ENCODE measurements at regions of chr1 and their contacts with region 1.

Region 1: DNA sequence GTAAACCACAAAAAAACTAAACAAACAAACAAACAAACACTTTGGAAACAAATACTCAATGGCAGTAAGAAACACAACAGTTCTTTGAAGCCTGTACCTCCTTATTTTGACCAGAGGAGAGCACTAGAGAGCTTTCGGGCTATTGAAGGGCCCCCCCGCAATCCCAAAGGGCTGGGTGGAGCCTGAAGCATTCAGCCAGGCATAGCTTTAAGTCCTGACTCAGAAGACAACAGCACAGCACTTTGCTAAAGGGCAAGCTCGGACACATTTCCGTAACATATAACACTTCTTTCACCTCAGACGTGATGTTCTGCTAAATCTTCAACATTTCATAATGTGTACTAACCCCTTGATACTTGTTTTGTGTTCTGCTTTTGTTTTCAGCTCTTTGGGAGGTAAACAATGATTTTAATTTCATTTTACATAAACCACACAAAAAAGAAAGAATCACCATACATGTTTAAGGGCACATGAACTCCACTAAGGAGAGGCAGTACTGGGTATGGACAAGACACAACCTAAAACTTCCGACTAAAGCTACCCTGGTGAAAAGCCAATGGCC is 9.7 kb upstream of the SHCBP1L start:
- DNase-seq: peak in 3 of 9 donors; percentile 5 to 31 (median 19)
- ATAC-seq: peak; percentile 83
- H3K4me3 ChIP-seq: no peak overlapping the region
- H3K4me3 Mint-ChIP-seq: no peak overlapping the region
- H3K27ac ChIP-seq: no peak overlapping the region
- H3K27ac Mint-ChIP-seq: no peak overlapping the region
- H3K4me1 ChIP-seq: no peaks in the 10 kb centered on the region
- H3K4me1 Mint-ChIP-seq: peaks cover 0 to 3% (median 0%) of the 10 kb centered on the region in 7 donors
- H3K27me3 ChIP-seq: no peaks in the 10 kb centered on the region
- H3K27me3 Mint-ChIP-seq: peaks cover 12 to 21% (median 17%) of the 10 kb centered on the region in 5 donors

Region 2: DNA sequence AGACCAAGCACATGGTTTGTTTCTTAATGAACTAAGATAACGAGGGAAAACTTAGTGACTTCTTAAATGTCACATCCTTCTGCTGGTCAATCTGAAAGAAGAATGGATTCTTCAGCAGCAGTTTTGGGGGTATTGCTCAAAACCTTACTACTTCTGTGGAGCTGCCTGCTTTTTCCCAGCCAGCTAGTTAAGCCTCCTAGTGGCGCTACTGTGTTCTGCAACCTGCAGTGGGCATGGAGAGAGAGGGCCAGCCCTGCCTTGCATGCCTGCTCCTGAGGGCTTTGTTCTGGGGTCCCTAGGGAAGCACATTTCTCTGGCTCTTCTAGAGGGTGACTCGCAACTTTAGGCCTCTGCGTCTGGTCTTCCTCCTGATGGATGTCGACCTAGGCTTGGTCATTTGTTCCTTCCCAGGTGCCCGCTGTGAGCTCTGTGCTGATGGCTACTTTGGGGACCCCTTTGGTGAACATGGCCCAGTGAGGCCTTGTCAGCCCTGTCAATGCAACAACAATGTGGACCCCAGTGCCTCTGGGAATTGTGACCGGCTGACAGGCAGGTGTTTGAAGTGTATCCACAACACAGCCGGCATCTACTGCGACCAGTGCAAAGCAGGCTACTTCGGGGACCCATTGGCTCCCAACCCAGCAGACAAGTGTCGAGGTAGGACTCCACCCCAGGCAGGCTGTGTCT is 265.5 kb after region 1 on chr1:
- CTCF ChIA-PET with region 1: no interaction called
- POLR2A ChIA-PET with region 1: no interaction called
- intact Hi-C with region 1: loop called (anchors 1 to 5 kb)
- DNase-seq: peak in 5 of 9 donors; percentile 30 to 56 (median 34)
- ATAC-seq: peak; percentile 52
- H3K4me3 ChIP-seq: no peak overlapping the region
- H3K4me3 Mint-ChIP-seq: no peak overlapping the region
- H3K27ac ChIP-seq: no peak overlapping the region
- H3K27ac Mint-ChIP-seq: no peak overlapping the region
- H3K4me1 ChIP-seq: no peaks in the 10 kb centered on the region
- H3K4me1 Mint-ChIP-seq: peaks cover 0 to 5% (median 0%) of the 10 kb centered on the region in 7 donors
- H3K27me3 ChIP-seq: no peaks in the 10 kb centered on the region
- H3K27me3 Mint-ChIP-seq: peaks cover 0 to 6% (median 0%) of the 10 kb centered on the region in 5 donors

Region 3: DNA sequence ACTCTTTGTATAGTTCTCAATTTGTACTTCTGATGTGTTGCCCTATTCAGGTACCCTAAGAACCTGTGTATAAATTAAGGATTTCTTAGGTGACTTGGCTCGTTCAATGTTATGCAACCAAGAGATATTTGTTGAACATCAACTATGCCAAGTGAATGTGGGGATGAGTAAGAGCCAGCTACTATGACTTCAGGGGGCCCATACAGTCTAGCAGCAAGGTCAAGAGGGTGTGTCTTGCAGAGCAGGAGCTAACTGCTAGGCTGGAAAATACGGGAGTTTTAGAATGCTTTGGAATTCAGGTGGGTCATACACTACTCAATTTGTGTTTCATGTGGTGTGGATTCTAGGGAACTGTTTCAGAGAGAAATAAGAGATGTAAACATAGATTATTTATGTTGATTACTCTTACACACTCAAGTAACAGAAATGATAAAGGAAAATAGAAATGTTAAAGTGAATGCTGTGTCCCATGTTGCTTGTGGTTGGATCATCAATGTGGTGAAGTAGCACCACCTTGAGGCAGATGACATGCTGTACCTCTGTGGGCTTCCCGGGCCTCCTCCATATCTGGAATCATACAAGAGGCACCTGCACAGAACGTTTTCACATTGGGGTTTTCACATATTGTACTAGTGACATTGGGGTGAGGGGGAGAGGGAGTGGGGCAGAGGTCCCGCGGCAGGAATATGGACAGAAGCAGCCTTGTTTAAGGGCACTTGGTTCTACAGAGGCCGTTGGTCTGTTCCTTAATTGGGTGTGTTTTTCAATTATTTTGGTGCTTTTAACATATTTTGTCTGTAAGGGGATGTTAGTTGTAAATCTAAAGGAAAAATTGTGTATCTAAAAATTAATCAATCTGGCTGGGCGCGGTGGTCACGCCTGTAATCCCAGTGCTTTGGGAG is 660.5 kb after region 1 on chr1:
- CTCF ChIA-PET with region 1: no interaction called
- POLR2A ChIA-PET with region 1: no interaction called
- intact Hi-C with region 1: loop called in 1 of 2 experiments (anchors 2 kb)
- DNase-seq: peak in 7 of 9 donors; percentile 38 to 67 (median 43)
- ATAC-seq: peak; percentile 96
- H3K4me3 ChIP-seq: no peak overlapping the region
- H3K4me3 Mint-ChIP-seq: no peak overlapping the region
- H3K27ac ChIP-seq: peak overlapping the region; percentile 37
- H3K27ac Mint-ChIP-seq: peak overlapping the region; percentile 1 to 76 (median 58)
- H3K4me1 ChIP-seq: peaks cover 0 to 5% of the 10 kb centered on the region in 2 donors
- H3K4me1 Mint-ChIP-seq: peaks cover 10 to 48% (median 20%) of the 10 kb centered on the region in 7 donors
- H3K27me3 ChIP-seq: no peaks in the 10 kb centered on the region
- H3K27me3 Mint-ChIP-seq: no peaks in the 10 kb centered on the region

Region 4: GRCh38 chr1:183685112-183685713 is 722.6 kb after region 1 on chr1:
- CTCF ChIA-PET with region 1: no interaction called
- POLR2A ChIA-PET with region 1: no interaction called
- intact Hi-C with region 1: loop called in 1 of 2 experiments (anchors 2 kb)
- DNase-seq: peak in 7 of 9 donors; percentile 20 to 63 (median 54)
- ATAC-seq: peak; percentile 86
- H3K4me3 ChIP-seq: no peak overlapping the region
- H3K4me3 Mint-ChIP-seq: no peak overlapping the region
- H3K27ac ChIP-seq: no peak overlapping the region
- H3K27ac Mint-ChIP-seq: no peak overlapping the region
- H3K4me1 ChIP-seq: no peaks in the 10 kb centered on the region
- H3K4me1 Mint-ChIP-seq: peaks cover 0 to 4% (median 0%) of the 10 kb centered on the region in 7 donors
- H3K27me3 ChIP-seq: no peaks in the 10 kb centered on the region
- H3K27me3 Mint-ChIP-seq: peaks cover 0 to 30% (median 0%) of the 10 kb centered on the region in 5 donors

Region 5: GRCh38 chr1:184352776-184353175 is 1390.1 kb after region 1 on chr1:
- CTCF ChIA-PET with region 1: no interaction called
- POLR2A ChIA-PET with region 1: no interaction called
- intact Hi-C with region 1: no loop called
- DNase-seq: no peak
- ATAC-seq: no peak
- H3K4me3 ChIP-seq: no peak overlapping the region
- H3K4me3 Mint-ChIP-seq: no peak overlapping the region
- H3K27ac ChIP-seq: no peak overlapping the region
- H3K27ac Mint-ChIP-seq: no peak overlapping the region
- H3K4me1 ChIP-seq: no peaks in the 10 kb centered on the region
- H3K4me1 Mint-ChIP-seq: no peaks in the 10 kb centered on the region
- H3K27me3 ChIP-seq: no peaks in the 10 kb centered on the region
- H3K27me3 Mint-ChIP-seq: peaks cover 13 to 26% (median 20%) of the 10 kb centered on the region in 5 donors

Measured in naive thymus-derived CD4-positive, alpha-beta T cell (primary cell).